ENCODE measurements at regions of chr13 and their contacts with region 1.

Region 1: DNA sequence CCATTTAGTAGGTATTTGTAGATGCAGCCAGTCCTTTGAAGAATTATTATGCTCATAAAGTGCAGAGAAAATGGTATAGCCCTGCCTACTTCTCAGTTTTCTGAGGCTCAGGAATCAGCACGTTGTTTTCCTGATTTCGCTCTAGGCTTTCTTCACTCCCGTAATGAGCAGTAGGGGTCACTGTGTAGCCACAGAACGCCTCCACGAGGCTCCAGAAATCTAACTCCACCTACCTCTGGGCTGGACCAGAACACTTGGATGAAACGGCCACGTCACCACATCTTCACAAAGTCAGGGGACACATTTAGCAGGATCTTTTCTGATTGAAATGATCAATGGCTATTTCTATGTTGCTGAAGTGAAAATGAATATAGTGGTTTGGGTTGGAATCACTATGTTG is 49.8 kb upstream of the GTF3A start:
- DNase-seq: peak; percentile 89
- ATAC-seq: peak; percentile 84
- H3K4me3 ChIP-seq: peak overlapping the region; percentile 56
- H3K27ac ChIP-seq: peak overlapping the region; percentile 91
- H3K4me1 ChIP-seq: peaks cover 19% of the 10 kb centered on the region
- H3K27me3 ChIP-seq: no peaks in the 10 kb centered on the region
- CTCF ChIP-seq: peak; percentile 85

Region 2: DNA sequence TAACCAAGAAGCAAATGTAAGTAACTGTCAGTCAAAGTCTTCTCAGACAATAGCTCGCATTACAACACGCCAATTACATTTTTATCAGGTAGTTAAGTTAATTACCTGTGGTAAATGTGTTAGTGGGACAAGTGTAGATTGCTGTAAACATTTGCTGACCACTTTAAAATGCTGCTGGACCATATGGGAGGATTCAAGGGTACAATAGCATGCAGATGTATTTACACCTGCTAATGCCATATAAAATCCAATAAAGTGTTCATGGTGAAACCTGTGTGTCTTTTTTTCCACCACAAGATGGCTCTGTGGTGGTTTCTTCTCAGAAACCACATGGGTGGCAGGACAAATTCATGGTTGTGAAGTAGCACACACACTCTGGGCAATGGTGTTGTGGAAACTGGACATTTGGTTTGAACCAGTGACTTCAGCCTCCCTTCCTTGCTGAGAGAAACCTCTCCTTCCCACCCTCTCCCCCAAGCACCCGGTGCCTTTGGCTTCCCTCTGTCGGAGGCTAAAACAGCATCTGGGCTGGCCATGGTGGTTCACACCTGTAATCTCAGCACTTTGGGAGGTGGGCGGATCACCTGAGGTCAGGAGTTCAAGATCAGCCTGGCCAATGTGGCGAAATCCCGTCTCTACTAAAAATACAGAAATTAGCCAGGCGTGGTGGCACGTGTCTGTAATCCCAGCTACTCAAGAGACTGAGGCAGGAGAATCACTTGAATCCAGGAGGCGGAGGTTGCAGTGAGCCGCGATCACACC is 31.7 kb after region 1 on chr13:
- CTCF ChIA-PET with region 1: no interaction called
- POLR2A ChIA-PET with region 1: no interaction called
- intact Hi-C with region 1: loop called (anchors 2 kb)
- DNase-seq: peak; percentile 62
- ATAC-seq: peak; percentile 48
- H3K4me3 ChIP-seq: no peak overlapping the region
- H3K27ac ChIP-seq: no peak overlapping the region
- H3K4me1 ChIP-seq: peaks cover 16% of the 10 kb centered on the region
- H3K27me3 ChIP-seq: peaks cover 2% of the 10 kb centered on the region; the same call in 1 of the 2 replicates
- CTCF ChIP-seq: peak; percentile 72

Region 3: GRCh38 chr13:27449936-27450828 is 75.5 kb after region 1 on chr13 and contains the start of gene MTIF3:
- CTCF ChIA-PET with region 1: no interaction called
- POLR2A ChIA-PET with region 1: no interaction called
- intact Hi-C with region 1: loop called (anchors 2 kb)
- DNase-seq: peak; percentile 96
- ATAC-seq: peak; percentile 85
- H3K4me3 ChIP-seq: peak within 1 kb of the TSS; percentile 93
- H3K27ac ChIP-seq: peak within 1 kb of the TSS; percentile 98
- H3K4me1 ChIP-seq: peaks cover 16% of the 10 kb centered on the region
- H3K27me3 ChIP-seq: no peaks in the 10 kb centered on the region
- CTCF ChIP-seq: no peak
- total RNA-seq, gene MTIF3: 28.2 and 43.9 TPM in 2 replicates

Region 4: GRCh38 chr13:27665333-27665732 is 290.7 kb after region 1 on chr13:
- CTCF ChIA-PET with region 1: no interaction called
- POLR2A ChIA-PET with region 1: no interaction called
- intact Hi-C with region 1: loop called (anchors 5 kb)
- DNase-seq: peak; percentile 35
- ATAC-seq: no peak
- H3K4me3 ChIP-seq: no peak overlapping the region
- H3K27ac ChIP-seq: no peak overlapping the region
- H3K4me1 ChIP-seq: no peaks in the 10 kb centered on the region
- H3K27me3 ChIP-seq: no peaks in the 10 kb centered on the region
- CTCF ChIP-seq: peak; percentile 59

Region 5: DNA sequence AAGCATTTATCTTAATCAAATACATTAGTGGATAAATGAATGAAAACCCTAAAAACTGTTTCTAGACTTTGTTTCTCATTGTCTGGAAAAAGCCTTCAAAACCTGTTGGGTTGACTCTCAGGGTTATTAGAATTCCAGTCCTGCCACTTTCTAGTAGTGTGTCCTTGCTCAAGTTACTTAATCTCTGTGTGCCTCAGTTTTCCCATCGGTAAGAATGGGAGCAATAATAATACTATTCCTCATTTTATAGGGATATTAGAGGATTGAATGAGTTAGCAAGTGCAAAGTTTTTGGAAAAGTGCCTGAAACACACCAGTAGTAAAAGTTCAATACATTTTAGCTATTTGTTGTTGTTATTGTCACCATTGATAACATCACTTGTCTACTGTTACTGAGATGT is 611.0 kb after region 1 on chr13:
- CTCF ChIA-PET with region 1: no interaction called
- POLR2A ChIA-PET with region 1: no interaction called
- intact Hi-C with region 1: loop called (anchors 2 kb)
- DNase-seq: no peak
- ATAC-seq: no peak
- H3K4me3 ChIP-seq: no peak overlapping the region
- H3K27ac ChIP-seq: no peak overlapping the region
- H3K4me1 ChIP-seq: no peaks in the 10 kb centered on the region
- H3K27me3 ChIP-seq: peaks cover 24% of the 10 kb centered on the region
- CTCF ChIP-seq: no peak

Region 6: GRCh38 chr13:28047757-28048388 is 673.2 kb after region 1 on chr13:
- CTCF ChIA-PET with region 1: no interaction called
- POLR2A ChIA-PET with region 1: no interaction called
- intact Hi-C with region 1: no loop called
- DNase-seq: peak; percentile 42
- ATAC-seq: peak; percentile 37; the same call in 1 of the 2 replicates
- H3K4me3 ChIP-seq: no peak overlapping the region
- H3K27ac ChIP-seq: no peak overlapping the region
- H3K4me1 ChIP-seq: no peaks in the 10 kb centered on the region; the same call in 1 of the 2 replicates
- H3K27me3 ChIP-seq: peaks cover 24% of the 10 kb centered on the region
- CTCF ChIP-seq: no peak

Measured in PC-3 (cell line).